AG04450 (cell line): ENCODE measurements at regions of chr2 and their contacts with region 1.

Region 1: GRCh38 chr2:40448468-40449079 is 3.3 kb downstream of the SLC8A1 start:
- DNase-seq: no peak
- H3K4me3 ChIP-seq: no peak overlapping the region
- H3K27ac ChIP-seq: no peak overlapping the region
- H3K27me3 ChIP-seq: no peaks in the 10 kb centered on the region
- CTCF ChIP-seq: peak; percentile 67

Region 2: DNA sequence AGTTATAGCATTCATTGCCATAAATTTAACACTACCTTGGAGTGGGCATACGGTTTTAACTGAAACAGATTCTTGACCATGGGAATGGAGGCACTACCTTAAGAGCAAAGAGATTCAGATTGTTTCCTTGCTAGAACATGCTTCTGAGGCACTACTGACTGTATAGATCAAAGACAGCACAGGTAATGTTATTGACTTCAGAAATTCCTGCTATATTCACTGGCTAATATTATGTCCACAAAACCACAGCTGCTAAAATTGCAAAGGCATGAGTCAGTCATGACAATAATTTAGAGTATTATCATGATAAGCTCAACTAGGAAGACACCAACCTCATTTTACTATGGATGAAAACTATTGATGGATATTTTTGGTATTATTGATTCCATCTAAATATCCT is 36.1 kb before region 1 on chr2:
- CTCF ChIA-PET with region 1: no interaction called
- POLR2A ChIA-PET with region 1: no interaction called
- DNase-seq: no peak
- H3K4me3 ChIP-seq: no peak overlapping the region
- H3K27ac ChIP-seq: no peak overlapping the region
- H3K27me3 ChIP-seq: no peaks in the 10 kb centered on the region
- CTCF ChIP-seq: no peak

Region 3: GRCh38 chr2:40431600-40431955 is 17.0 kb before region 1 on chr2:
- CTCF ChIA-PET with region 1: interaction called, 19 read pairs
- POLR2A ChIA-PET with region 1: interaction called, 8 read pairs
- DNase-seq: peak; percentile 39
- H3K4me3 ChIP-seq: no peak overlapping the region
- H3K27ac ChIP-seq: no peak overlapping the region
- H3K27me3 ChIP-seq: no peaks in the 10 kb centered on the region
- CTCF ChIP-seq: no peak